ENCODE measurements at regions of chr7 and their contacts with region 1.

Region 1: GRCh38 chr7:100428199-100428966 is at the start of gene ZCWPW1:
- DNase-seq: peak; percentile 93 to 99 (median 96)
- ATAC-seq: peak; percentile 61 to 64
- H3K4me3 Mint-ChIP-seq: peak within 1 kb of the TSS; percentile 89 to 100 (median 99)
- H3K27ac Mint-ChIP-seq: peak within 1 kb of the TSS; percentile 99 to 100 (median 100)
- H3K4me1 Mint-ChIP-seq: peaks cover 26 to 51% (median 46%) of the 10 kb centered on the region in 4 donors
- H3K27me3 Mint-ChIP-seq: peaks cover 0 to 11% (median 0%) of the 10 kb centered on the region in 5 donors
- polyA plus RNA-seq, gene ZCWPW1: 3.1 to 9.3 (median 5.5) TPM

Region 2: GRCh38 chr7:100119062-100119700 is 309.2 kb before region 1 on chr7 and contains the starts of genes CNPY4 and TAF6:
- POLR2A ChIA-PET with region 1: interaction called, 10 read pairs
- DNase-seq: peak; percentile 90 to 97 (median 94)
- ATAC-seq: peak; percentile 72 to 74
- H3K4me3 Mint-ChIP-seq: peak within 1 kb of the TSS; percentile 91 to 99 (median 97)
- H3K27ac Mint-ChIP-seq: peak within 1 kb of the TSS; percentile 96 to 100 (median 99)
- H3K4me1 Mint-ChIP-seq: peaks cover 11 to 38% (median 29%) of the 10 kb centered on the region in 4 donors
- H3K27me3 Mint-ChIP-seq: no peaks in the 10 kb centered on the region
- polyA plus RNA-seq, gene CNPY4: 19.8 to 23.5 (median 20.6) TPM
- polyA plus RNA-seq, gene TAF6: 21.3 to 39.0 (median 31.5) TPM

Region 3: GRCh38 chr7:100221231-100221718 is 207.1 kb before region 1 on chr7:
- POLR2A ChIA-PET with region 1: interaction called, 31 read pairs
- DNase-seq: peak; percentile 54 to 94 (median 84)
- ATAC-seq: peak; percentile 62 to 80
- H3K4me3 Mint-ChIP-seq: peak overlapping the region; percentile 88 to 99 (median 96)
- H3K27ac Mint-ChIP-seq: peak overlapping the region; percentile 96 to 100 (median 98)
- H3K4me1 Mint-ChIP-seq: peaks cover 26 to 80% (median 71%) of the 10 kb centered on the region in 4 donors
- H3K27me3 Mint-ChIP-seq: peaks cover 0 to 2% (median 0%) of the 10 kb centered on the region in 5 donors

Region 4: GRCh38 chr7:100456558-100456957 is 28.2 kb after region 1 on chr7:
- POLR2A ChIA-PET with region 1: interaction called, 44 read pairs
- DNase-seq: no peak
- ATAC-seq: no peak
- H3K4me3 Mint-ChIP-seq: no peak overlapping the region
- H3K27ac Mint-ChIP-seq: peak overlapping the region in 2 of 10 donors; percentile 15 to 71
- H3K4me1 Mint-ChIP-seq: peaks cover 3 to 20% (median 8%) of the 10 kb centered on the region in 4 donors
- H3K27me3 Mint-ChIP-seq: no peaks in the 10 kb centered on the region

Region 5: DNA sequence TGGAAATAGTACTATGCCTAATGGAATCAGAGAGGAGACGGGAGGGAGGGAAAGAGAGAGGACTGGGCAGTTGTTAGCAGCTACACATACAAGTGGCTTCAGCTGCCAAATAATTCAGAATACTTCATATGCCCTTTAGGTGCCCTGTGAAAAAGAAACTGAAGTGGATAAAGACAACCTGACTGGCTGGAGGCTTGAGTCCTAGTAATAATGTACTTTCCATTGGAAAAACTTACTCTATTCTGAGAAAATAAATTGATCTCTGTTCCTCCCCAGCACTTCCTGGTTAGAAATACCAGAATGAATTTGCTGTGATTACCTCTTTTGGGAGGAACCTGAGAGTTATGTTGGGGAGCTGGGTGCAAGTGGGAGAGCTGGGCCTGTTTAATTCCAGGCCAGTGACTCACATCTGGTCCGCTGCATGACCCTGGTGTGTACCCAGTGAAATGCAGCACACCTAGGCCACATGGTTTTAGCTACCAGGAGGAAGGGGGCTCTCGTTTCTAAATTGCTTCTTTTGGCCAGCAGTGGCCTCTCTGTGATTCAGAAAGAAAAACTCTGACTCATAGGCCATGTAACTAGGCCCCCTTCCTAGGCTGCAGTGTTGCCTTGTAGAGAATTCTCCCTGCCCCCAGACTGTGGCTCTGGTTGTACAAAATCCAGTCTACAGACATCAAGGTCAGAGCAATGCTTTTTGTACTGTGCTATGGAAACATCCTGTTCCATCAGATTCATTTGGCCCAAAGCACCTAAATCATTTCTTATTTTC is 117.2 kb after region 1 on chr7:
- POLR2A ChIA-PET with region 1: interaction called, 11 read pairs
- DNase-seq: peak in 3 of 10 donors; percentile 18 to 24 (median 20)
- ATAC-seq: peak; percentile 67 to 71
- H3K4me3 Mint-ChIP-seq: peak overlapping the region; percentile 36 to 88 (median 75)
- H3K27ac Mint-ChIP-seq: peak overlapping the region; percentile 81 to 96 (median 92)
- H3K4me1 Mint-ChIP-seq: peaks cover 52 to 99% (median 93%) of the 10 kb centered on the region in 4 donors
- H3K27me3 Mint-ChIP-seq: no peaks in the 10 kb centered on the region

Region 6: DNA sequence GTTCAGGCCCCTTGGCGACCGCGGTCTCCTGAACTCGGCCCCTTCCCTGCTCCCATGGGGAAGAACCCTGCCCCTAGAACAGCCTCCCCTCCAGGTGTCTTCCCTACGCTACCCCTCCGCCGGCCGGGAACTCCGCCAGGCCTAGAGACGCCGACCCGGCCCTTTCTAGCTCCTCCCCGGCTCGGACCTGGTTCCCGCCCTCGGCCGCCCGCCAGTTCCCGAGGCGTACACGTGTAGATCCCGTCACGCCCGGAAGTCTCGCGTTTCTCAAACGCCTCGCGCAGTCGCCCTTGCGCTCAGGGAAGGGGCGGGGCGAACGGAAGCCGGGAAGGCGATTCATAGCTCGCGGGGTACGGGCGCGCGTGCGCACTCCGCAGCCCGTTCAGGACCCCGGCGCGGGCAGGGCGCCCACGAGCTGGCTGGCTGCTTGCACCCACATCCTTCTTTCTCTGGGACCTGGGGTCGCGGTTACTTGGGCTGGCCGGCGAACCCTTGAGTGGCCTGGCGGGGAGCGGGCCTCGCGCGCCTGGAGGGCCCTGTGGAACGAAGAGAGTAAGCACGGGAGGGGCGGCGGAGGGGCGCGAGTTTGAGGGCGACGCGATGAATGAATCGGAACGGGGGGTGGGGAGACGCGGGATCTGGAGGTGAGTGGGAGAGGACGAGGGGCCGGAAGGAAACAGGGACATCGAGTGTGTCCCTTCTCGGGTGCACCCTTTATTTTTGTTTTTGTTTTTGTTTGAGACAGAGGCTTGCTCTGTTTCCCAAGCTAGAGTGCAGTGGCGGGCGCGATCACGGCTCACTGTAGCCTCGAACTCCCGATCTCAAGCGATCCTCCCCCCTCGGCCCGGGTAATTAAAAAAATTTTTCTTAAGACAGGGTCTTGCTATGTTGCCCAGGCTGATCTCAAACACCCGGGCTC is 277.6 kb after region 1 on chr7 and contains the start of gene POP7:
- POLR2A ChIA-PET with region 1: interaction called, 10 read pairs
- DNase-seq: peak; percentile 96 to 99 (median 98)
- ATAC-seq: peak; percentile 93 to 95
- H3K4me3 Mint-ChIP-seq: peak within 1 kb of the TSS; percentile 91 to 99 (median 96)
- H3K27ac Mint-ChIP-seq: peak within 1 kb of the TSS; percentile 88 to 96 (median 93)
- H3K4me1 Mint-ChIP-seq: peaks cover 8 to 25% (median 20%) of the 10 kb centered on the region in 4 donors
- H3K27me3 Mint-ChIP-seq: peaks cover 0 to 2% (median 0%) of the 10 kb centered on the region in 5 donors
- polyA plus RNA-seq, gene POP7: 32.6 to 41.7 (median 33.0) TPM

Measured in naive thymus-derived CD8-positive, alpha-beta T cell (primary cell).